A673 (cell line): ENCODE measurements at regions of chr9 and their contacts with region 1.

Region 1: DNA sequence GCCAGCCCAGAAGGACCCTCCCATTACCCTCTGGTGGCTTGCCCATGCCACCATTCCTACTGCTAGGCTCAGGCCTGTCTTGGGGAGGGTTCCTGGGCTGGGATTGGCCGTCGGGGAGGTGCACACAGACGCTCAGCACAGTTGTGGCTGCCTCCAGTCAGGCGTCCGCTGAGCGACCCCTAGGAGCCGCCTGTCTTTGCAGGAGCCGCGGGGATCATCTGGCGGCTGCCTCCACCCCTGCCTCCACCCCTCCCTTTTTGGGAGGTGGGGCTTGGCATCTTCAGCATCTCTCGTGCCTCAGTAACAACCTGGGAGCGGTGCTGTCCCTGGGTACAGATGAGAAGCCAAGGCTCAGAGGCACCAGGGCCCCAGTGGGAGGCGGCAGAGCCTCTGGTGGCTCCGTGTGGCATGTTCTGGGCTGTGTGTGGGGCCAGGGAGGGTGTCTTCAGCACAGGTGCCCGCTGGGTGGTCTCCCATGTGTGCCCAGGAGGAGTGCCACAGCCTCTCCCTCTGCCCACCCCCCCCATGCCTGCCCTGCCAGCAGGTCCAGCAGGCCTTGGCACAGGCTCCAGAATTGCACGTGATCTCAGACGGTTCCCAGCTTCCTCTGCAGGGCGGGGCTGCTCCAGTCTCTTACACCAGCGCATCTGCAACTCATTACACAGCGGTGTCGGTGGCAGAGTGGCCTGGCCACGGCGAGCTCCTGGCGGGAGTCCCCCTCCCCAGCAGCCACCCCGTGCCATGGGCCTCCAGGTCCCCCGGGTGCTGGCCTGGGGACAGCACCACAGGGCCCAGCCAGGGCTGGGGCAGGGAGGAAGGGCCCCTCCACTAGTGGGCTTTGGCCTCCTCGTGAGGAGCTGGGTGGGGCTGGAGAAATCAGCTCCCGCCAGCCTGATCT is 39.8 kb downstream of the RXRA start:
- DNase-seq: peak; percentile 94
- H3K4me3 ChIP-seq: peak overlapping the region; percentile 6
- H3K27ac ChIP-seq: peak overlapping the region; percentile 86
- H3K4me1 ChIP-seq: peaks cover 61% of the 10 kb centered on the region
- H3K27me3 ChIP-seq: no peaks in the 10 kb centered on the region
- CTCF ChIP-seq: 0 out of 2 replicates have a peak, but pooled peaks have one; percentile 12

Region 2: DNA sequence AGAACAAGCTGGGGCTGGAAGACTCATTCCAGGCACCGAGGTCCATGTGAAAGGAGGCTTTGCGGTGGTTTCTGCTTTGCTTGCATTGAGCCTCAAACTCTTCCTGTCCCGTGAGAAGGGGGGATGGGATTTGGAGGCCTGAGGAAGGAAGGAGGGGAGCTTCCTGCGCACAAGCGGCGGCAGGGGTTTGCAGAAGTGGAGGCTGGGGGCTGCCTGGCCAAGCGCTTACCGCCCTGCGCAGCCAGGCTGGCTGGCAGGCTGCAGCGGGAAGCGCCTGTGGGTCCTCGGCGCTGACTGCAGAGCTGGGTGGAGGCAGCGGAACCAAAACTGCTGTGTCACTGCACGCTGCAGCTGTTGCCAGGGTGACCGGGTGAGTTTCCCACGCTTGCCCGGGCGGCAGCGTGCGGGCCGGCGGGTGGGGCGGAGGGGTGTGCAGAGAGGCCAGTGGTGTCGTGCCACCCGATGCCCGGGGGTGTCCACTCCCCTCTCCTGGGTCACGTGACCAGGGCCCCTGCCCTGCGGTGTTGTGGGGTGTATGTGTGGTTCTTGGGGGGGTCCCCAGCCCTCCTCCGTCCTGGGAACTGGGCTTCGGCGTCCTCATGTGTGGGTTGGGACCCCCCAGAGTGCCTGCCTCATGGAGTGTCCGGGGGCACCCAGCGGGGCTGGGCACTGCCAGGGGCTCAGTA is 41.2 kb after region 1 on chr9:
- CTCF ChIA-PET with region 1: no interaction called
- POLR2A ChIA-PET with region 1: no interaction called
- intact Hi-C with region 1: loop called (anchors 5 kb)
- DNase-seq: peak; percentile 92
- H3K4me3 ChIP-seq: peak overlapping the region; percentile 25
- H3K27ac ChIP-seq: peak overlapping the region; percentile 90
- H3K4me1 ChIP-seq: peaks cover 67% of the 10 kb centered on the region
- H3K27me3 ChIP-seq: no peaks in the 10 kb centered on the region
- CTCF ChIP-seq: no peak

Region 3: DNA sequence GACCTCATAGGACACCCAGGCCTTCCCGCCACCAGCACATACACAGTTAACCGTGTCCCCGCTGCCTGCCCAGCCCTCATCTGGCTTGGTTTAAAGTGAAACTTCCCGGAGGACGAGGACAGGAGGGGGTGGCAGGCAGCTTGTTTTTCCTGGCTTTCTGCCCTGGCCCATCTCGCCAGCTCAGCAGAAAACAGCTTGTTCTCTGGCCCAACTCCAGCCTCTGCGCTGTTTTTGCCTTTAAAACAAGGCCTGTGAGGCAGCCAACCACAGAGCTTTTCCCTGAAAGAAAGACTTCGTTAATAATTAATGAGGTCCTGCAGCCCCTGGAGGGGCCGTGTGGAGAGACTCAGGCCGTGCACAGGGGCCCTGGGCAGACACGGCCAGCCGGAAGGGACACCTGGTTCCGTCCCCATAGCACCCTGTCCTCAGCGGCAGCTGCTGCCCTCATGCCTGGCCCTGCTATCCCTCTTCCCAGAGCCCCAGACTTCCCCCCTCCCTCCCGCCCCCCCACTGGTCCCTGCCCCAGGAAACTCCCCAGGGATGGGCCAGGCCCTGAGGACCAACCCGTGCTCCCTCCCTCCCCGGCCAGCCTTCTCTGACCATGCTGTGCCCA is 69.0 kb after region 1 on chr9:
- CTCF ChIA-PET with region 1: interaction called, 4 read pairs
- POLR2A ChIA-PET with region 1: interaction called, 10 read pairs
- intact Hi-C with region 1: no loop called
- DNase-seq: peak; percentile 98
- H3K4me3 ChIP-seq: no peak overlapping the region
- H3K27ac ChIP-seq: peak overlapping the region; percentile 84
- H3K4me1 ChIP-seq: peaks cover 17% of the 10 kb centered on the region
- H3K27me3 ChIP-seq: no peaks in the 10 kb centered on the region
- CTCF ChIP-seq: no peak